ENCODE measurements at regions of chr11 and their contacts with region 1.

Region 1: DNA sequence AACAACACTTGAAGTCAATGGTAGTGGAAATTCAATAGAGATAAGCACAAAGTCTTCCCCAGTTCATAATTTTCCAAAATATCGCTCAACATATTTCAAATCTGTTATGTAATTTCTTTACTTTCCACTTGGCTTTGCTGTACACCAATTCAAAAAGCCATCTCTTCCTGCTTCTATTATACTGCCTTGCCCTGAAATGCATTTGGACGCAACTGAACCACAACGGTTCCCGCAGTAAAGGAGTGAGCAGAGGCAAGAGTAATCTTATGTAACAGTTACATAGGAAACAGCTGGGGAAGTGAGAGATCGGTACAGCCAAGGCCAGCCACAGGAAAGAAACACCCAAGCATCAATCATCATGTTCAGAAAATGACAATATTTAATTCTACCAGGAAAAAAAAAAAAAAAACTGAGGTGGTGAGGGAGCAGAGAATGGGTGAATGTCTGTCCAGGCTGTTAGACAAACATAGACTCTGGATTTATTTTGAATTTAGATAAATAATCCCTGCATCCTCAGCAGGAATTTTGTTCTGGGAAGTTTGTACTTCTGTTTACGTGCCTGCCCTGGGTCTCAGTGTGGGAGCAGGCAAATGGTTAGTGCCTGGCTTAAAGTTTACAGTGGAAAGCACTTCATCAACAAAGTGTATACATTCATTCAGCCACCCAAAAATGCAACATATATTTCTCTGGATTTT is 392.2 kb downstream of the ETS1 start:
- DNase-seq: no peak
- ATAC-seq: peak in 7 of 8 donors; percentile 55 to 87 (median 72)
- H3K4me3 ChIP-seq: no peak overlapping the region
- H3K27ac ChIP-seq: peak overlapping the region in 2 of 10 donors; percentile 4 to 17
- H3K4me1 ChIP-seq: peaks cover 0 to 28% (median 10%) of the 10 kb centered on the region in 9 donors
- H3K27me3 ChIP-seq: no peaks in the 10 kb centered on the region
- CTCF ChIP-seq: peak in 3 of 9 donors; percentile 6 to 35 (median 22)

Region 2: GRCh38 chr11:128232588-128232987 is 37.4 kb after region 1 on chr11:
- intact Hi-C with region 1: no loop called
- DNase-seq: no peak
- ATAC-seq: no peak
- H3K4me3 ChIP-seq: no peak overlapping the region
- H3K27ac ChIP-seq: no peak overlapping the region
- H3K4me1 ChIP-seq: peaks cover 0 to 9% (median 0%) of the 10 kb centered on the region in 9 donors
- H3K27me3 ChIP-seq: no peaks in the 10 kb centered on the region
- CTCF ChIP-seq: no peak

Region 3: GRCh38 chr11:128279866-128280265 is 84.7 kb after region 1 on chr11:
- intact Hi-C with region 1: loop called in 1 of 10 experiments (anchors 10 kb)
- DNase-seq: no peak
- ATAC-seq: no peak
- H3K4me3 ChIP-seq: no peak overlapping the region
- H3K27ac ChIP-seq: no peak overlapping the region
- H3K4me1 ChIP-seq: no peaks in the 10 kb centered on the region
- H3K27me3 ChIP-seq: no peaks in the 10 kb centered on the region
- CTCF ChIP-seq: no peak